ENCODE measurements at regions of chr10 and their contacts with region 1.

Region 1: DNA sequence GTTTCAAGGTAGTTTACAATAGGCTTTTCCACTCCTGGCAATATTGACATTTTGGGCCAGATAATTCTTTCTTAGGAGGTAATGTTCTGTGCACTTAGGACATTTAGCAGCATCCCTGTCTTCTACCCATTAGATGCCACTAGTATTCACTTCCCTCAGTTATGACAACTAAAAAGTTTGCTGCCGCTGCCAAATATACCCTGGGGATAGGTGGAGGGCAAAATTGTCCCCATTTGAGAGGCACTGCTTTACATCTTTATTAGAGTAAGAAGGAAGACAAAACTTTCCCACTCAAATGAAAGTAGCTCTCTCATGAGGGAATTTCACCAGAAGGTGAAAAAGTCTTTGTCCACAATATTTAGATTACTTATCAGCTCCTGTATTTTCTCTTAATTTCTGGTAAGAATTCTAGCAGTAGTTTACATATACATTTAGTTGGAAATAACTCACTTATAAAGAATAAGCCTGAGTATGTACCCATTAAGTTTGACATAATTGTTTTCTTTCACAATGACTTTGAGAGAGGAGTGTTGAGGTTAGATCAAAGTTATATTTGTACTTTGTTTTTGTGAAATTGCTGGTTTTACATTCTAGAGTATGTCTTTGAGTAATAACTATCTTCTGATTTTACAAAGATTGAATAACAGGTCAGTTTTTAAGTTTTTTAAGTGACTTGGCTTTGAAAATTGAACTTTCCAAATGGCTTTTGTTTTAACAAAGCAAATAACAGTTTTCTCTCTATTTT is 46.0 kb downstream of the HELLS start:
- DNase-seq: no peak
- H3K4me3 Mint-ChIP-seq: peak overlapping the region; percentile 31
- H3K27ac Mint-ChIP-seq: peak overlapping the region; percentile 89
- H3K4me1 Mint-ChIP-seq: peaks cover 27% of the 10 kb centered on the region
- H3K27me3 Mint-ChIP-seq: no peaks in the 10 kb centered on the region

Region 2: GRCh38 chr10:94344522-94345122 is 247.0 kb before region 1 on chr10:
- intact Hi-C with region 1: no loop called
- DNase-seq: no peak
- H3K4me3 Mint-ChIP-seq: no peak overlapping the region
- H3K27ac Mint-ChIP-seq: no peak overlapping the region
- H3K4me1 Mint-ChIP-seq: peaks cover 7% of the 10 kb centered on the region
- H3K27me3 Mint-ChIP-seq: no peaks in the 10 kb centered on the region

Region 3: GRCh38 chr10:94545391-94546048 is 46.1 kb before region 1 on chr10 and contains the start of gene HELLS:
- intact Hi-C with region 1: loop called (anchors 2 kb)
- DNase-seq: peak; percentile 76
- H3K4me3 Mint-ChIP-seq: peak within 1 kb of the TSS; percentile 99
- H3K27ac Mint-ChIP-seq: peak within 1 kb of the TSS; percentile 98
- H3K4me1 Mint-ChIP-seq: peaks cover 35% of the 10 kb centered on the region
- H3K27me3 Mint-ChIP-seq: peaks cover 5% of the 10 kb centered on the region
- total RNA-seq, gene HELLS: 224 and 230 TPM in 2 replicates

Region 4: DNA sequence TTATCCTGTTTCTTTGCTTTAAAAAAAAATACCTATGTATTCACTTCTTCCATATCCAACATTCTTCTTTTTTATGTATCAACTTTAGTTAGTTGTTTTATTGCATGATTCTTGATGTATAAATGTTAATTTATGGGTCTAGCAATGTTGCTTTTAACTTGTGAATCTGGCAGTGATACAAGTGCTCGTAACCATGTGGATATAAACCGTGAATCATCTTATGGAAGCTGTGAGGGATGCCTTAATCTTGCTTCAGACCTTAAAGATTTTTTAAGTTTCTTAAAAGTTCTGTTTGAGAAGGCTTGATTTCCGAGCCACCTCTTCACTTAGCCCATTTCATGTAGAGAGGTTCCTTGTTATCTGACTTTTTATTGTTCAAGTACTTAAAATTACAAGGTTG is 20.1 kb before region 1 on chr10:
- intact Hi-C with region 1: loop called (anchors 2 kb)
- DNase-seq: no peak
- H3K4me3 Mint-ChIP-seq: no peak overlapping the region
- H3K27ac Mint-ChIP-seq: no peak overlapping the region
- H3K4me1 Mint-ChIP-seq: peaks cover 9% of the 10 kb centered on the region
- H3K27me3 Mint-ChIP-seq: no peaks in the 10 kb centered on the region

Region 5: DNA sequence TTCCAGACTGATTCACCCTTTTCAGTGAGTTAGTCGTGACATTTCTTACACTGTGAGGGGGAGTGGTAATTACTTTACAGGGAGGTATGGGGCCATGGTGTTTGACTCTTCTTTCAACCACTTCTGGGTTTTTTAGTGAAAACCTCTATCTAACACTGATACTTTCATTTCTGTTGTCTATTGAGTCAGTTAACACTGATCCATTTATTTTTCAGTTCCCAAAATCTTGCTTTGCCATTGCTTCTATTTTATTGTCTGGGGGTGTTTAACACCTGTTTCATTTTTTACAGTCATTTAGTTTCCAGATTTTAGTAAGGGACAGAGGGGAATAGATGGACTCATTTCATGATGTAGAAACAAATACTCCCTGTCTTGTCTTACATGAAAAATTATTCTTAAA is 15.5 kb after region 1 on chr10:
- intact Hi-C with region 1: loop called (anchors 1 kb)
- DNase-seq: no peak
- H3K4me3 Mint-ChIP-seq: no peak overlapping the region
- H3K27ac Mint-ChIP-seq: peak overlapping the region; percentile 82
- H3K4me1 Mint-ChIP-seq: peaks cover 20% of the 10 kb centered on the region
- H3K27me3 Mint-ChIP-seq: no peaks in the 10 kb centered on the region